ENCODE measurements at regions of chr4 and their contacts with region 1.

Region 1: DNA sequence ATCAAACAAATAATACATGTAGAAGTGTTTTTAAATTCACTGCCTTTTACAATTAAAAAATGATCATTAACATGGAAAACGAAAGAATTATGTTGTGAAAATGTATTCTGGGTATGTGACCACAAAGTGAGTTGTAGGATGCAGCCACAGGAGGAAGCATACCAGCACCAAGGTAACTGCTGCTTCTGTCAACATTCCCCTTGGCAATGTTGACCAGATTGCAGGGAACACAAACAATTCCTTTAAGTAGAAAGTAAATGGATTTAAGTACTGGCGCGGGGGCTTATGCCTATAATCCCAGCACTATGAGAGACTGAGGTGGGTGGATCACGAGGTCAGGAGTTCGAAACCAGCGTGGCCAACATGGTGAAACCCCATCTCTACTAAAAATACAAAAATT is 1877.9 kb upstream of the PCDH7 start:
- DNase-seq: no peak
- H3K4me3 ChIP-seq: no peak overlapping the region
- H3K27ac ChIP-seq: no peak overlapping the region
- H3K4me1 ChIP-seq: no peaks in the 10 kb centered on the region
- CTCF ChIP-seq: no peak

Region 2: GRCh38 chr4:28443798-28444412 is 398.4 kb before region 1 on chr4:
- CTCF ChIA-PET with region 1: no interaction called
- POLR2A ChIA-PET with region 1: interaction called, 11 read pairs
- intact Hi-C with region 1: no loop called
- DNase-seq: no peak
- H3K4me3 ChIP-seq: no peak overlapping the region
- H3K27ac ChIP-seq: no peak overlapping the region
- H3K4me1 ChIP-seq: no peaks in the 10 kb centered on the region
- CTCF ChIP-seq: no peak